A549 (cell line): ENCODE measurements at regions of chr11 and their contacts with region 1.

Region 1: GRCh38 chr11:86193297-86194095 is 51.1 kb upstream of the EED start:
- DNase-seq: peak; percentile 87 to 89
- ATAC-seq: peak; percentile 100
- H3K4me3 ChIP-seq: peak overlapping the region; percentile 29
- H3K27ac ChIP-seq: peak overlapping the region; percentile 50 to 81
- H3K4me1 ChIP-seq: peaks cover 15% of the 10 kb centered on the region; the same call in 2 of the 3 replicates
- CTCF ChIP-seq: peak; percentile 85
- EP300 ChIP-seq: no peak
- POLR2A ChIP-seq: no peak
- RAD21 ChIP-seq: peak; percentile 78 to 83

Region 2: GRCh38 chr11:86068951-86069407 is 124.5 kb before region 1 on chr11 and contains the start of gene PICALM:
- CTCF ChIA-PET with region 1: interaction called, 21 read pairs
- POLR2A ChIA-PET with region 1: interaction called, 28 read pairs
- DNase-seq: peak; percentile 85 to 98
- ATAC-seq: peak; percentile 85 to 91
- H3K4me3 ChIP-seq: peak within 1 kb of the TSS; percentile 81
- H3K27ac ChIP-seq: peak within 1 kb of the TSS; percentile 91 to 98
- H3K4me1 ChIP-seq: peaks cover 35% of the 10 kb centered on the region
- CTCF ChIP-seq: no peak
- EP300 ChIP-seq: no peak
- POLR2A ChIP-seq: peak; percentile 66
- RAD21 ChIP-seq: peak in 1 of 2 experiments; percentile 23; a peak in 1 of 5 replicates
- polyA plus RNA-seq, gene PICALM: 195 and 212 TPM in 2 replicates

Region 3: GRCh38 chr11:86148345-86148747 is 45.1 kb before region 1 on chr11:
- CTCF ChIA-PET with region 1: interaction called, 12 read pairs
- POLR2A ChIA-PET with region 1: no interaction called
- DNase-seq: no peak
- ATAC-seq: no peak
- H3K4me3 ChIP-seq: no peak overlapping the region
- H3K27ac ChIP-seq: no peak overlapping the region
- H3K4me1 ChIP-seq: peaks cover 30% of the 10 kb centered on the region
- CTCF ChIP-seq: no peak
- EP300 ChIP-seq: no peak
- POLR2A ChIP-seq: no peak
- RAD21 ChIP-seq: no peak

Region 4: GRCh38 chr11:86167565-86168050 is 25.9 kb before region 1 on chr11:
- CTCF ChIA-PET with region 1: interaction called, 47 read pairs
- POLR2A ChIA-PET with region 1: no interaction called
- DNase-seq: no peak
- ATAC-seq: no peak
- H3K4me3 ChIP-seq: no peak overlapping the region
- H3K27ac ChIP-seq: peak overlapping the region in 1 of 2 experiments; percentile 22; a peak in 1 of 6 replicates
- H3K4me1 ChIP-seq: peaks cover 18% of the 10 kb centered on the region
- CTCF ChIP-seq: no peak
- EP300 ChIP-seq: no peak
- POLR2A ChIP-seq: no peak
- RAD21 ChIP-seq: no peak

Region 5: DNA sequence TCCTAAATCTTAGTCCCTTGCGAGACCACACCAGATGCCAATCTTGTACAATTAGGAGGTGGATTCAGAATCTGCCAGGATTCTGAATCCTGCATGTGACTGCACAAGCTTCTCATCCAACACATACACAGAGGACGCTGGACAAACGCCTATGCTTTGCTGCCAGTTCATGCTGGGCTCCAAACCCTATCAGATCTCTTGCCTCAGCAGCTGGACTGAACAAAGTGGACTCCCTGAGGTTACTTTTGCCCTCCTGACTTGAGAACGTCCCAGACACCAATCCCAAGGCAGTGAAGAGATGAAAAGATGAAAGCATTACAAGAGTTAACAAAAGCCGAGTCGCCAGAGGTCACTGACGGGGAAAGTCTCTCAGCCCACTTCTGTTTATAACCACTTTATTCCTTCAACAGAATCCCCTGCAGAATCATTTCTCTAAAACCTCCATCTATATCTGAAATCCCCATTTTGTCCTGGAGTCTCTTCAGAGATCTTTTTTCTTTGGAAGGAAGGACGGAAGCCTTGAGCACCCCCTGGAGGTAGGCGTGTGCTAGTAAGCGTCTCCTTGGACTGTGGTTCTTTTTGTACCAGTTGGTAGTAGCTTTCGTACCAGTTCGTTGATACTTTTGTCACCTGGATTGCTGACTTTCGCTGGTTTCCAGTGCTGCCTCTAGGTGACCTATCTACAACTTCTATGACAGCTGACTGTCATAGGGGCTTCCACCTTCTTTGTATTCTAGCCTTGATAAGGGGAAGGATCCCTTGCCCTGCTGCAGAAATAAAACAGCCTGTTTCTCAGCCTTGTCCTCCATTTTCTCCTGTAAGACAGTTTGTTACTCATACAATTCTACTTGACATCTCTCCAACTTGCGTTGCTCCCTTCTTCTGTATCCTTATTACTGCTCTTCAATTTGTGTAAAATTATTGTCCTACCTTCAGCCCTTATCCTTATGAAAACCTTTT is 24.9 kb after region 1 on chr11:
- CTCF ChIA-PET with region 1: interaction called, 14 read pairs
- POLR2A ChIA-PET with region 1: no interaction called
- DNase-seq: peak; percentile 77 to 89
- ATAC-seq: peak; percentile 95 to 98
- H3K4me3 ChIP-seq: peak overlapping the region; percentile 22; the same call in 2 of the 3 replicates
- H3K27ac ChIP-seq: peak overlapping the region; percentile 12 to 42; a peak in 4 of 6 replicates
- H3K4me1 ChIP-seq: no peaks in the 10 kb centered on the region
- CTCF ChIP-seq: peak; percentile 84
- EP300 ChIP-seq: no peak
- POLR2A ChIP-seq: no peak
- RAD21 ChIP-seq: peak; percentile 80 to 90

Region 6: DNA sequence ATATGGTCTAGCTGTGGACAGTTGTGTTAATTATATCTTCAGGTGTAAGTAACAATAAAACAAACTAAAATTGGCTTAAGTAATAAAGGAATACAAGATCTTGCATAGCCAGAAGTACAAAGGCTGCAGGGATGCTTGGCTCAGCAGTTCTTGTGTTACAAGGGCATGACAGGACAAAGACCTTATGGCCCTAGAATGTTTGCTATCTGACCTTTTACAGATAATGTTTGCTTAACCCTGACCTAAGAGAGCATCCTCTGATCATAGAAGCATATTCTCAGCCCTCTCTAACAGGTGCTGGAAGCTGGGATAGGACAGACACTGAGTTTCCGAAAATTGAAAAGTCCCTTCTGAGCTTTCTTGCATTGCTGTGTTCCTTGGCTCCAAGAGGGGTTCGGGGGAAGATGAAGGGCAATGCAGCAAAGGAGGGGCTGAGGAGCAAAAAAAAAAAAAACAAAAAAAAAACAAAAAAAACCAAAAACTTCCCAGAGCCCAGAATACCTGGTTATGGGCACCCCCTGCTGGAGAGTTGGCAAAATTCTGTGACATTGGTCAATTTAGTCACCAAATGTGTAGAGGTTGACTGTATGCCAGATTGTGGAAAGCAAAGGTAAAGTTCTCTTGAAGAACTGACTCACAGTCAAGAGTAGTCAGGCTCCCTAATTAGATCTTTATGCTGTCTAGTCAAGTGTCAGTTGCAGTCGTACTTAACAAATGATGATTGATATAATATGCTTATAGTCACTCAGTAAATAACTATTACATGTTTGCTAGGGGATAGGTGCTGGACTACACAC is 98.2 kb after region 1 on chr11:
- CTCF ChIA-PET with region 1: no interaction called
- POLR2A ChIA-PET with region 1: no interaction called
- DNase-seq: peak; percentile 49
- ATAC-seq: peak; percentile 71 to 74
- H3K4me3 ChIP-seq: no peak overlapping the region
- H3K27ac ChIP-seq: no peak overlapping the region
- H3K4me1 ChIP-seq: no peaks in the 10 kb centered on the region
- CTCF ChIP-seq: peak; percentile 90
- EP300 ChIP-seq: no peak
- POLR2A ChIP-seq: no peak
- RAD21 ChIP-seq: peak; percentile 82 to 86

Region 7: GRCh38 chr11:86610559-86611341 is 417.3 kb after region 1 on chr11:
- CTCF ChIA-PET with region 1: no interaction called
- POLR2A ChIA-PET with region 1: no interaction called
- DNase-seq: no peak
- ATAC-seq: no peak; a peak in 1 of 6 replicates
- H3K4me3 ChIP-seq: no peak overlapping the region
- H3K27ac ChIP-seq: peak overlapping the region in 1 of 2 experiments; percentile 69; a peak in 3 of 6 replicates
- H3K4me1 ChIP-seq: peaks cover 36% of the 10 kb centered on the region
- CTCF ChIP-seq: no peak
- EP300 ChIP-seq: no peak
- POLR2A ChIP-seq: no peak
- RAD21 ChIP-seq: no peak